WTC11 (cell line): ENCODE measurements at regions of chr1 and their contacts with region 1.

Region 1: DNA sequence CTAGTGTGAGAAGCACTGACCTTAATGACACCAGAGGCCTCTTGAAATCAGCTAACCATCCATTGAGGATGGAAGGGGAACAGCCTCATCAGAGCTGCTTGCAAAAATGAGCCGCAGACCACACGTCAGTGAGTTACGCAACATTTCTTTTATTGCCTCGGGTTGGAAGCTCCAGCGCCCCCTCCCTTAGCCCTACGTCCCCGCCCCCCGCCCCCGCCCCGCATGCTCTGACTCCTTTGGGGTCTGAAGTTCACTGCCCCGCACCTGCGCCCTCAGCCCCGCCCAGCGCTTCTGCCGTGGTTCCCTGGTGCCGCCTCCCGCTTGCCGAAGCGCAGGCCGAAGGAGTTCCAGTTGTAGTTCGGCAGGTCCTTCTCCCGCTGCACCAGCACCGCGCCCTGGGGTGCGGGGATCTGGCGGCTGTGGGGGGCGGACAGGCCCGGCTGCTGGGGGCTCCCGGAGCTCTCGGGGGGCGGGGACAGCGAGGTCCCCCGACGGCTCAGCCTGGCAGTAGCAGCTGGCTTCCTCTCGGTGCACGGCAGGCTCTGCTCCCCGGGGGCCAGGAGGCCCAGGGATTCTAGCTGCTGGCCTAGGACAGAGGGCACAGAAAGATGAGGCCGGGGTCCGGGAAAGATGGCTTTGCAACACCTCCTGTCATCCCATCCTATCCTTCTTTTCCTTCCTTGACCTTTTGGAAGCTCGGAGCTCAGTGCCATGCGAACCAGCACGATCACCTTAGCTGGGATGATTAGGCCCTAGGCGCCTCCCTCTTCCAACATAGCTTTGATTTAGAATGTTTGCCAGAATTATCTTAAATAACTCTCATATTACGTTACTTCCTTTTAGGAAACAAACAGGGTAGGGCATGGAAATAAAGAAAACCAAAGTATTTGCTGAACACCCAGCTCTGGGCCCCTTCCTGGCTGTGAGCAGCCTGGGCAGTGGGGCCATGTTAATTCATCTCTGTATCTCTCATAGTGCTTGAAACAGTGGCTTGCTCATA is 5.8 kb downstream of the KISS1 start:
- DNase-seq: peak; percentile 75
- ATAC-seq: peak; percentile 78
- H3K4me3 Mint-ChIP-seq: peak overlapping the region; percentile 61
- H3K27ac Mint-ChIP-seq: no peak overlapping the region
- H3K4me1 Mint-ChIP-seq: peaks cover 8% of the 10 kb centered on the region
- H3K27me3 Mint-ChIP-seq: peaks cover 66% of the 10 kb centered on the region
- CTCF ChIP-seq: no peak

Region 2: GRCh38 chr1:203172128-203173010 is 1018.1 kb before region 1 on chr1:
- CTCF ChIA-PET with region 1: no interaction called
- POLR2A ChIA-PET with region 1: no interaction called
- DNase-seq: peak; percentile 88
- ATAC-seq: peak; percentile 91
- H3K4me3 Mint-ChIP-seq: no peak overlapping the region
- H3K27ac Mint-ChIP-seq: no peak overlapping the region
- H3K4me1 Mint-ChIP-seq: peaks cover 11% of the 10 kb centered on the region
- H3K27me3 Mint-ChIP-seq: no peaks in the 10 kb centered on the region
- CTCF ChIP-seq: peak; percentile 96

Region 3: GRCh38 chr1:204151552-204152309 is 38.8 kb before region 1 on chr1 and contains the start of gene ETNK2:
- CTCF ChIA-PET with region 1: interaction called, 11 read pairs
- POLR2A ChIA-PET with region 1: interaction called, 4 read pairs
- DNase-seq: peak; percentile 66
- ATAC-seq: peak; percentile 29
- H3K4me3 Mint-ChIP-seq: peak within 1 kb of the TSS; percentile 73
- H3K27ac Mint-ChIP-seq: no peak within 1 kb of the TSS
- H3K4me1 Mint-ChIP-seq: peaks cover 39% of the 10 kb centered on the region
- H3K27me3 Mint-ChIP-seq: peaks cover 29% of the 10 kb centered on the region
- CTCF ChIP-seq: no peak
- total RNA-seq, gene ETNK2: 18.3 to 20.2 TPM (median 19.7 TPM) in 3 replicates